IMR-90 (cell line): ENCODE measurements at regions of chr2 and their contacts with region 1.

Region 1: GRCh38 chr2:191432121-191432520 is 186.9 kb downstream of the MYO1B start:
- DNase-seq: peak; percentile 13
- ATAC-seq: no peak
- H3K4me3 ChIP-seq: no peak overlapping the region
- H3K27ac ChIP-seq: no peak overlapping the region
- H3K4me1 ChIP-seq: 0 out of 2 replicates have a peak, but pooled peaks cover 4% of the 10 kb centered on the region
- H3K27me3 ChIP-seq: no peaks in the 10 kb centered on the region
- CTCF ChIP-seq: no peak
- POLR2A ChIP-seq: no peak
- RAD21 ChIP-seq: no peak

Region 2: DNA sequence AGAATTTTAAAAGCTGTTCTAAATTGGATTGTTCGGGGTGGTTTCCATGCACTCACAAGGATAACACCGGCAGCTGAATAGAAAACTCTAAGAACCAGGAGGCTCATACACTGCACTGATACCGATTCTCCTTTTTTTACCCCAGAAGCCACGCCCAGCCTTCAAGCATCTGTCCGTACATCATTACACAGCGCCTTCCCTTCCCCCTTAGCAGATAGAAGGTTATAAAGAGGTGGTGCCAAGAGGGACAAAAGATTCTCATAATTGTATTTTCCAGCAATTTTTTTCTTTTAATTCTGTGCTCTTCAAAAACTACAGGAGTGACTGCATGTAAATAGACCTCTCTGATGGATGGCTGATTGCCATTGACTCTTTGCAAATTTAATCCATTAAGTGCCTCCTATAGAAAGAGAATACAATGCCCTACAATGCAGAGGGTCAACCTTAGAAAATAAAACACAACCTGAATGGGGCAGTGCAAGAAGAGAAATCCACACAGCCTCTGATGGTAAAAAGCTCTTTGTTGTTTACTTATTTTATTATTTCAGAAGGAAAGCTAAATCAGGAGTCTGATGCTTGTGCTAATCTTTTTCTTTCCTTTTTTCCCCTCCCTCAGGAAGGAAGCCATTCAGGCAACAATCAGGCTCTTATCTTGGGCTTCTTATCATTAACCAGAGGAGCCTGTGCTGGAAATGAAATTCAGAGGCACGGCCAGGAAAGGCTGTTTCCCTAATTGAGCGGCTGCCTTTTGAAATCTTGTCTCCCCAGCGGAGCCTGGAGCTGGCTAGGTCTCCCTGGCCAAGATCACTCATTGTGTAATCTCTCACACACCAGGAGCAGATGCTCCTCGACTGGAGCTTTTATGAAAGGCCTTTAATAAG is 46.9 kb after region 1 on chr2:
- CTCF ChIA-PET with region 1: no interaction called
- POLR2A ChIA-PET with region 1: no interaction called
- dilution Hi-C with region 1: no loop called
- in situ Hi-C with region 1: no loop called
- intact Hi-C with region 1: loop called (anchors 5 kb)
- DNase-seq: peak; percentile 39
- ATAC-seq: peak; percentile 68
- H3K4me3 ChIP-seq: no peak overlapping the region
- H3K27ac ChIP-seq: no peak overlapping the region
- H3K4me1 ChIP-seq: no peaks in the 10 kb centered on the region
- H3K27me3 ChIP-seq: no peaks in the 10 kb centered on the region
- CTCF ChIP-seq: no peak
- POLR2A ChIP-seq: no peak
- RAD21 ChIP-seq: no peak